ENCODE measurements at regions of chr11 and their contacts with region 1.

Region 1: DNA sequence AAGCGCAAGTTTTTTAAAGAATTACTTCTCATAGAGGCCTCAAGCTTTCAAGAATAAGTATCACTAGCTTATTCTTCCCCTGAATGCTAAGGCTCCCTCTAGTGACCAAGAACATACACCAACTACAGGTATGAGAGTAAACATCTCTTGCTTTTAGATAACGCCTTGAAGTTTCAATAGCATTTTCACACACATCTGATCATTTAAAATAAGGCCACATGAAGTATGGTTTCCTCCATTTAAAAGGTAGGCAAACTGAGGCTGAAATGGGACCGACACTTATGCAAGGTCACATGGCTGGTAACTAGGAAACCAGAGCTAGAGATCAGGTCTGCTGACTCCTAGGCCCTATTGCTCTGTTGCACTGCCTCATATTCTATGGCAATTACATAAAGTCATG is 66.5 kb downstream of the CCDC34 start:
- DNase-seq: no peak
- ATAC-seq: peak; percentile 98
- H3K4me3 ChIP-seq: no peak overlapping the region
- H3K27ac ChIP-seq: no peak overlapping the region
- H3K4me1 ChIP-seq: no peaks in the 10 kb centered on the region
- H3K27me3 ChIP-seq: no peaks in the 10 kb centered on the region
- CTCF ChIP-seq: peak; percentile 63 to 67 (median 63)
- EP300 ChIP-seq: no peak
- POLR2A ChIP-seq: no peak
- RAD21 ChIP-seq: peak; percentile 69

Region 2: DNA sequence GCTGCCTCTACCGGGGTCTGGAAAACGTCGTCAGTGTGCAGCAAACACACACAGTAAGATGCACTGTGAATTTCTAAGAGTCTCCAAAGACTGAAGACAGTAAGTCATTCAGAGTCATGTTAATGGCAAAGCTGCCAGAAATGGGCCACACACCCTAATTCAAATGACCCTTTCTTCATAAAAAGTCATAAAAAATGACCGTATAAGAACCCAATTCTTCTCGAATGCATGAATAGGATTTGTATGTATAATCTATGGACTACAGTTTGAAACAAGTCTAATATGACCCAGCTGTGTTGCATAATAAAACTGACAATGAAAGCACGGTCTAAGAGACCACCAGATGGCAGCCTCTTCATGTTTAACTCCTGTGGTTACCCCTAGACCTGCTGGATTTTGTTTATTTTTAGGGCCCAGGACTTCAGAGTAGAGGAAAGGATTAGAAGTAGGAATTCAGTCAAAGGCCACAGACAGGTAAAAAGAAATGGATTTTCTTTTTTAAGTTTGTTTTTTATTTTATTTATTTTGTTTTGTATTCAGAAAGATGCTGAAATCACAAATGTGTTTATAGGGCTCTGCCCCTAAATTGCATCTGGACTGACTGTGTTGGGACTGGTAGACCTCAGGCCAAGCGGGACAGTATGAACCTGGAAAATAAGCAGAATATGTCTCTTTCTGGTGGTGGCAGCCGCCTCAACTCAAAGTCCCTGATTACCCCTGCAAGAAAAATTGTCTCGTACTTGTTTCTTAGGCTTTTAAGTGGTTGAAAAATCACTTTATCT is 542.6 kb before region 1 on chr11:
- CTCF ChIA-PET with region 1: interaction called, 4 read pairs
- POLR2A ChIA-PET with region 1: no interaction called
- RAD21 ChIA-PET with region 1: no interaction called
- SMC1A ChIA-PET with region 1: no interaction called
- in situ Hi-C with region 1: no loop called
- intact Hi-C with region 1: loop called (anchors 10 kb)
- DNase-seq: no peak
- ATAC-seq: peak; percentile 94
- H3K4me3 ChIP-seq: no peak overlapping the region
- H3K27ac ChIP-seq: no peak overlapping the region
- H3K4me1 ChIP-seq: no peaks in the 10 kb centered on the region
- H3K27me3 ChIP-seq: 0 out of 4 replicates have a peak, but pooled peaks cover 0 to 2% of the 10 kb centered on the region in 2 experiments
- CTCF ChIP-seq: peak; percentile 34 to 56 (median 51); a peak in 4 of 6 replicates
- EP300 ChIP-seq: no peak
- POLR2A ChIP-seq: no peak
- RAD21 ChIP-seq: peak; percentile 68

Region 3: DNA sequence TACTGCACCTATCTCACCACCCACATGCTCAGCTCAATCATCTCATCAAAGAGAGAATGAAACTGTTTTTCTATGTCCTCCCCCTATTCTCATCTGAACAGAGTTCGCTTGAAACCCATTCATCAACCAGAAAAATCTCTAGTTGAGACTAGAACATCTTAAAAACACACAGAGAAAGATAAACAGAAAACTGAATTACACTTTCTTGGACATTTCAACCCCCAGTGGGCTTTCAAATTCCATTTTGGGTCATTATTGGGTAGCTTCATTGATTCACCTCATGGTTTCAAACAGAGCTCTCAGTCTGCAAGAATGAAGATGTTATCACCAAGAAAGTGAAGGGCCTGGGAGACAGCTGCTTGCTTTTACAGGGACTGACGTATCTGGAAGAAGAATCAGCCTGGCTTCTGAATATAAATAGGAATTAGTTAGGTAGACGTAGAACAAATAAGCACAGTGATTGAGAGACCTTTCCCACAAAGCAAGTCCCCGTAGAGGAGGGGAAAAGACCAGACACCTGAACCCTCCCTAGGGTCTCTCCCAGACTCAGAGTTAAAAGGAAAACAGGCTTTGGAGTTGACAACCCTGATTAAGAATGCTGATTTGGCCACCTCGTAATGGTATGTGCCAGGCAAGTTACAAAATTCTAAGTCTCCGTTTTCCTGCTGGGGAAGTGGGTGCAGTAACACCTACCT is 100.1 kb before region 1 on chr11:
- CTCF ChIA-PET with region 1: interaction called, 72 read pairs
- POLR2A ChIA-PET with region 1: no interaction called
- RAD21 ChIA-PET with region 1: interaction called, 14 read pairs
- SMC1A ChIA-PET with region 1: interaction called, 29 read pairs
- in situ Hi-C with region 1: no loop called
- intact Hi-C with region 1: no loop called
- DNase-seq: no peak
- ATAC-seq: no peak
- H3K4me3 ChIP-seq: no peak overlapping the region
- H3K27ac ChIP-seq: no peak overlapping the region
- H3K4me1 ChIP-seq: no peaks in the 10 kb centered on the region
- H3K27me3 ChIP-seq: no peaks in the 10 kb centered on the region
- CTCF ChIP-seq: no peak
- EP300 ChIP-seq: no peak
- POLR2A ChIP-seq: no peak
- RAD21 ChIP-seq: no peak

Region 4: GRCh38 chr11:27209562-27210005 is 86.9 kb before region 1 on chr11:
- CTCF ChIA-PET with region 1: interaction called, 72 read pairs
- POLR2A ChIA-PET with region 1: interaction called, 3 read pairs
- RAD21 ChIA-PET with region 1: interaction called, 13 read pairs
- SMC1A ChIA-PET with region 1: interaction called, 29 read pairs
- in situ Hi-C with region 1: no loop called
- intact Hi-C with region 1: loop called (anchors 2 kb)
- DNase-seq: no peak
- ATAC-seq: peak; percentile 65
- H3K4me3 ChIP-seq: no peak overlapping the region
- H3K27ac ChIP-seq: no peak overlapping the region
- H3K4me1 ChIP-seq: no peaks in the 10 kb centered on the region
- H3K27me3 ChIP-seq: no peaks in the 10 kb centered on the region
- CTCF ChIP-seq: no peak
- EP300 ChIP-seq: no peak
- POLR2A ChIP-seq: no peak
- RAD21 ChIP-seq: no peak

Region 5: GRCh38 chr11:27241311-27242122 is 55.0 kb before region 1 on chr11:
- CTCF ChIA-PET with region 1: interaction called, 14 read pairs
- POLR2A ChIA-PET with region 1: no interaction called
- RAD21 ChIA-PET with region 1: interaction called, 4 read pairs
- SMC1A ChIA-PET with region 1: interaction called, 6 read pairs
- in situ Hi-C with region 1: no loop called
- intact Hi-C with region 1: no loop called
- DNase-seq: no peak
- ATAC-seq: no peak
- H3K4me3 ChIP-seq: no peak overlapping the region
- H3K27ac ChIP-seq: no peak overlapping the region
- H3K4me1 ChIP-seq: no peaks in the 10 kb centered on the region
- H3K27me3 ChIP-seq: no peaks in the 10 kb centered on the region
- CTCF ChIP-seq: no peak
- EP300 ChIP-seq: no peak
- POLR2A ChIP-seq: no peak
- RAD21 ChIP-seq: no peak

Region 6: DNA sequence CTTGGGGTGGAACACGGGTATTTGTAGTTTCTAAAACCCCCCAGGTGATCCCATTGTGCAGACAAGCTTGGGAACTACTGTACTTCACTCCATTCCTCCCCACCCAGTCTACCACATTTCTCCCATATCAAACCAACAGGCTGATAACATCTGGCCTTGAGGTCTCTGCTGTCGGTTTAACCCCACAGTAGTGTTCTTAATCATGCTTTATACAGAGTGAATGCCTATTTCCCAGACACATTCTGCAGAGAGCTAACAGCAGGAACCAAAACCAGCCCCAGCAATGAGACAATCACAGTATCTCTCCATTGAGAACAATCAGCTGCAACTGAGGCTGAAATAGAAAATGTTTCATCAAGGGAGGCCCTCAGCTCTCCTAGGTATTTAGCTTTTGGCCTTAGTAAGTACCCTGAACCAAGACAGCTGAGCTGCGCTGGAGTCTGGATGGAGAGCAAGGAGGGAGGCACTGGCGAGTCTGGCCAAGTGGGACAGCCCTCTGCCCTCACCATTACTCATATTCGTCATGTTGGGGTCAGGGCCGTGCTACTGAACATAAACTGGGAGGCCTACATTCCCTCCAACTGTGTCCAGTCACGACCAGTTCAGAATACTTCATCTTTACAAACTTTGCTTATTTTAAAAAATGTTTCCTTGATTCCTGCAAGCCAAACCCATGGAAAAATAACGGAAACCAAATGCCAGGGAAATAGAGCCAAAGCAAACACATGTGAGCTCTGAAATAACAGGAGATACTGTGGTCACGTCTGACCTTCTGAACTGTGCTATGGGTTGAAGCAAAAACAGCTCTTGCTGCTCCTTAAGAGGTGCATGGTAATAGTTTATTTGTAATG is 14.5 kb before region 1 on chr11:
- CTCF ChIA-PET with region 1: interaction called, 33 read pairs
- POLR2A ChIA-PET with region 1: no interaction called
- RAD21 ChIA-PET with region 1: interaction called, 15 read pairs
- SMC1A ChIA-PET with region 1: interaction called, 12 read pairs
- in situ Hi-C with region 1: no loop called
- intact Hi-C with region 1: no loop called
- DNase-seq: peak; percentile 19
- ATAC-seq: peak; percentile 90
- H3K4me3 ChIP-seq: no peak overlapping the region
- H3K27ac ChIP-seq: no peak overlapping the region
- H3K4me1 ChIP-seq: no peaks in the 10 kb centered on the region
- H3K27me3 ChIP-seq: no peaks in the 10 kb centered on the region
- CTCF ChIP-seq: no peak
- EP300 ChIP-seq: 0 out of 4 replicates have a peak, but pooled peaks of 1 of the 2 experiments have one; percentile 30
- POLR2A ChIP-seq: no peak
- RAD21 ChIP-seq: no peak

Region 7: DNA sequence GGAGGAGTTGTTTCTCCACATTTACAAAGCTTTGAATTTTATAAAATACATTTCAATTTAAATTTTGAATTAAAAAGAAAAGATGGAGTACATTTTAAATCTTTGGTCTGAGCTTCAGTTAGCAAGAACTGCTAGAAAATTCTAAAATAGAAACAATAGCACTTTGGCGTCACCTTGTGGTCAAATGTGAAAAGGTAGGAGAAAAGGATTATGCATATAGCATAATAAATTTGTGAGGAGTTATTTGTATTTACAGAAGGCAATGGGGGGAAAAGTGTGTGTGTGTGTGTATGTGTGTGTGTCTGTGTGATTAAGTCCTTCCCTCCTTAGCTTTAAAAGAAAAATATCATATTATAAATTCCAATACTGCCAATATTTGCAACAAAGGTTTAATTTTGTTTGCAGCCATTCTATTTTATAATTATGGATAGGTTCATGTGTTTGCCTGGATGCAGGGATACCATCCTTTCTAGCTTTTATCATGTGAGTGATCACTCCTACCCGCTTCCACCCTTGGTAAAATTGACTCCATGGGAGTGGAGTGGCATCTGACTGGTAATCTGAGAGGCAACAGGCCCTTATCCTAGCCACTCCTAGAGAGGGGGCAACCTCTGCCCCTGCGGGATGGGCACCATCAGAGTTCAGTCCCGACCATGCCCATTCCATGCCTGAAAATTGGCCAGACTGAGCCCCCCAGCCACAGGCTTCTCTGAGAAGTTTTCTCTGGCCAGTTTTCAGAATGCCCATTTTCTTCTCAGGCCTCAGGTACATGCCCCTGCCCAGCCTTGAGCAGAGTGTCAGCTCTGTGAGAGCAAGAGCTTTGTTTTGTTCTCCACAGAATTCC is 189.7 kb after region 1 on chr11:
- CTCF ChIA-PET with region 1: interaction called, 72 read pairs
- POLR2A ChIA-PET with region 1: no interaction called
- RAD21 ChIA-PET with region 1: interaction called, 43 read pairs
- SMC1A ChIA-PET with region 1: interaction called, 31 read pairs
- in situ Hi-C with region 1: no loop called
- intact Hi-C with region 1: loop called (anchors 5 kb)
- DNase-seq: no peak
- ATAC-seq: peak; percentile 82
- H3K4me3 ChIP-seq: no peak overlapping the region
- H3K27ac ChIP-seq: no peak overlapping the region
- H3K4me1 ChIP-seq: no peaks in the 10 kb centered on the region
- H3K27me3 ChIP-seq: no peaks in the 10 kb centered on the region
- CTCF ChIP-seq: peak; percentile 80 to 87 (median 82); a peak in 5 of 6 replicates
- EP300 ChIP-seq: no peak
- POLR2A ChIP-seq: no peak
- RAD21 ChIP-seq: peak; percentile 96